ENCODE measurements at regions of chr3 and their contacts with region 1.

Region 1: DNA sequence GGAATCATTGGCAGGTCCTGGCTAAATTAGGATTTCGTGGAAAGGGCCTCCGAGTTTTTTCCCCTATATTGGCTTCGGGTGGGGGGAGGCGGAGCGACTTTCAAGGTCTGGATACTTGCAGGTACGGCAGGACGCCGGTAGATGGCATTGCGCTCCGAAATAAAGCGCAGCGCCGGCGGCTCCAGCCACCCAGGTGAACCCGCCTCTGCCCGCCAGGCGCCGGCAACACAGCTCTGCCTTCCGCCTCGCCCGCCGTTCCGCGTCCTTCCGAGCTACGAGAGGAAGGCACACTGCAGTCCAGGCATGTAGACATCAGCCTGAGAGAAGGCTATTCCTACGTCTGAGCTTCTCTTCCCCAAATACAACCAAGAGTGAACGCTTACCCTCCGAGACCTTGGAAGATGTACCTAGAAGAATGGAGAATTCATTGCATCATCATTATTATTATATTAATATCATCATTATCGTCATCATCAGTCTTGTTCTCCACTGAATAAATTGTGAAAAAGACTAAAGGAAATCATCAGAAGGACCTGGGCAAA is 514.1 kb downstream of the MECOM start:
- DNase-seq: peak; percentile 84 to 93 (median 90)
- ATAC-seq: peak; percentile 77 to 90 (median 86)
- H3K4me3 ChIP-seq: peak overlapping the region in 2 of 4 donors; percentile 52 to 54
- H3K27ac ChIP-seq: peak overlapping the region in 3 of 4 donors; percentile 22 to 91 (median 91)
- H3K4me1 ChIP-seq: peaks cover 0 to 21% (median 15%) of the 10 kb centered on the region in 3 donors
- H3K27me3 ChIP-seq: no peaks in the 10 kb centered on the region
- CTCF ChIP-seq: peak; percentile 60 to 89 (median 80)

Region 2: DNA sequence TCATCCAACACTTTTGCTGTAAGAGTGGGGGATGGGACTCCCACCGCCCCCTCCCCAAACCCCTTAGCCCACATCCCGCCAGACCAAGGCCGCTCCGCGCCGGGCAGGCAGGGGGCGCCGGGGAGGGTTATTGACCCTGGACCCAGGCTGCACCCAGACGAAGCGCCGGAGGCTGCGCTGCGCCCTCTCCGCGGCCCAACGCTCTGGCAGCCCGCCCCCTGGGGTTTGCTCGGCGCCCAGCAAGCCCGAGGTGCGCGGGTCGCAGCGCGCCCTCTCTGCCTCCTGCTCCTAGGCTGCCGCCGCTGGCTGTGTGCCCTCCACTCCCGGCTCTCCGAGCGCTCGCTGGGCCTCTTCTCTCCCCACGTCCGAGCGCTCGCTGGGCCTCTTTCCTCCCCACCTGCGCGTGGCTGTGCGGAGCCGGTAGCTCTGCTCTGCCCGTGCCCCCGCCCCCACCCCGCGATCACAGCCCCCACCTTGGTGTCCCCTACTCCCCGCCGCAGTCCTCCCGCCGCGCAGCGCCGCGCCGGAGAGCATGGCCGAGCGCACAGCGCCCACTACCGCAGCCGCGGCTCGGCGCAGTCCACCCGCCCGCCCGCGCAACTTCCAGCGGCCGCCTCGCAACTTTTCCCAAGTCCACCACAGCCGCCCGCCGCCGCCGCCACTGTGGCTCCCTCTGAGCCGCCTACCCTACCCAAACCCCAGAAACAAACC is 512.9 kb after region 1 on chr3:
- intact Hi-C with region 1: loop called in 2 of 3 experiments (anchors 5 to 10 kb)
- DNase-seq: peak; percentile 80 to 93 (median 88)
- ATAC-seq: peak; percentile 55 to 71 (median 62)
- H3K4me3 ChIP-seq: peak overlapping the region; percentile 22 to 75 (median 69)
- H3K27ac ChIP-seq: peak overlapping the region; percentile 83 to 93 (median 88)
- H3K4me1 ChIP-seq: peaks cover 0 to 11% (median under 1%) of the 10 kb centered on the region in 3 donors
- H3K27me3 ChIP-seq: peaks cover 0 to 11% (median 0%) of the 10 kb centered on the region in 4 donors
- CTCF ChIP-seq: peak; percentile 25 to 41 (median 34)

Measured in pancreas (tissue), 10 donors.